CD8-positive, alpha-beta T cell (primary cell): ENCODE measurements at regions of chr12 and their contacts with region 1.

Region 1: GRCh38 chr12:116924558-116925453 is 14.1 kb downstream of the FBXW8 start:
- DNase-seq: peak; percentile 4 to 90 (median 46)
- ATAC-seq: peak; percentile 87
- H3K4me3 ChIP-seq: peak overlapping the region; percentile 7 to 13
- H3K4me3 Mint-ChIP-seq: peak overlapping the region; percentile 68
- H3K27ac ChIP-seq: no peak overlapping the region
- H3K27ac Mint-ChIP-seq: peak overlapping the region; percentile 56
- H3K4me1 ChIP-seq: peaks cover 66% of the 10 kb centered on the region
- H3K4me1 Mint-ChIP-seq: peaks cover 80% of the 10 kb centered on the region
- H3K27me3 ChIP-seq: no peaks in the 10 kb centered on the region
- H3K27me3 Mint-ChIP-seq: no peaks in the 10 kb centered on the region
- CTCF ChIP-seq: no peak

Region 2: GRCh38 chr12:116558280-116559161 is 366.3 kb before region 1 on chr12:
- CTCF ChIA-PET with region 1: no interaction called
- POLR2A ChIA-PET with region 1: no interaction called
- intact Hi-C with region 1: no loop called
- DNase-seq: peak in 1 of 9 experiments; percentile 15
- ATAC-seq: no peak
- H3K4me3 ChIP-seq: peak overlapping the region; percentile 40 to 47
- H3K4me3 Mint-ChIP-seq: peak overlapping the region; percentile 69
- H3K27ac ChIP-seq: peak overlapping the region in 1 of 2 experiments; percentile 53
- H3K27ac Mint-ChIP-seq: peak overlapping the region; percentile 94
- H3K4me1 ChIP-seq: peaks cover 29% of the 10 kb centered on the region
- H3K4me1 Mint-ChIP-seq: peaks cover 48% of the 10 kb centered on the region
- H3K27me3 ChIP-seq: no peaks in the 10 kb centered on the region
- H3K27me3 Mint-ChIP-seq: no peaks in the 10 kb centered on the region
- CTCF ChIP-seq: no peak

Region 3: GRCh38 chr12:116697305-116697704 is 227.5 kb before region 1 on chr12:
- CTCF ChIA-PET with region 1: no interaction called
- POLR2A ChIA-PET with region 1: no interaction called
- intact Hi-C with region 1: no loop called
- DNase-seq: peak in 1 of 9 experiments; percentile 14
- ATAC-seq: no peak
- H3K4me3 ChIP-seq: no peak overlapping the region
- H3K4me3 Mint-ChIP-seq: no peak overlapping the region
- H3K27ac ChIP-seq: no peak overlapping the region
- H3K27ac Mint-ChIP-seq: no peak overlapping the region
- H3K4me1 ChIP-seq: no peaks in the 10 kb centered on the region
- H3K4me1 Mint-ChIP-seq: peaks cover 8% of the 10 kb centered on the region
- H3K27me3 ChIP-seq: peaks cover 0 to 2% of the 10 kb centered on the region in 2 experiments
- H3K27me3 Mint-ChIP-seq: peaks cover 27% of the 10 kb centered on the region
- CTCF ChIP-seq: no peak

Region 4: GRCh38 chr12:116910645-116911451 is 14.0 kb before region 1 on chr12 and contains the start of gene FBXW8:
- CTCF ChIA-PET with region 1: no interaction called
- POLR2A ChIA-PET with region 1: interaction called, 7 read pairs
- intact Hi-C with region 1: loop called (anchors 1 kb)
- DNase-seq: peak; percentile 17 to 79 (median 64)
- ATAC-seq: peak; percentile 75
- H3K4me3 ChIP-seq: peak within 1 kb of the TSS; percentile 52
- H3K4me3 Mint-ChIP-seq: peak within 1 kb of the TSS; percentile 87
- H3K27ac ChIP-seq: peak within 1 kb of the TSS in 1 of 2 experiments; percentile 43
- H3K27ac Mint-ChIP-seq: peak within 1 kb of the TSS; percentile 76
- H3K4me1 ChIP-seq: peaks cover 9% of the 10 kb centered on the region
- H3K4me1 Mint-ChIP-seq: peaks cover 35% of the 10 kb centered on the region
- H3K27me3 ChIP-seq: no peaks in the 10 kb centered on the region
- H3K27me3 Mint-ChIP-seq: peaks cover 2% of the 10 kb centered on the region
- CTCF ChIP-seq: no peak
- total RNA-seq, gene FBXW8: 5.6 to 6.5 TPM

Region 5: DNA sequence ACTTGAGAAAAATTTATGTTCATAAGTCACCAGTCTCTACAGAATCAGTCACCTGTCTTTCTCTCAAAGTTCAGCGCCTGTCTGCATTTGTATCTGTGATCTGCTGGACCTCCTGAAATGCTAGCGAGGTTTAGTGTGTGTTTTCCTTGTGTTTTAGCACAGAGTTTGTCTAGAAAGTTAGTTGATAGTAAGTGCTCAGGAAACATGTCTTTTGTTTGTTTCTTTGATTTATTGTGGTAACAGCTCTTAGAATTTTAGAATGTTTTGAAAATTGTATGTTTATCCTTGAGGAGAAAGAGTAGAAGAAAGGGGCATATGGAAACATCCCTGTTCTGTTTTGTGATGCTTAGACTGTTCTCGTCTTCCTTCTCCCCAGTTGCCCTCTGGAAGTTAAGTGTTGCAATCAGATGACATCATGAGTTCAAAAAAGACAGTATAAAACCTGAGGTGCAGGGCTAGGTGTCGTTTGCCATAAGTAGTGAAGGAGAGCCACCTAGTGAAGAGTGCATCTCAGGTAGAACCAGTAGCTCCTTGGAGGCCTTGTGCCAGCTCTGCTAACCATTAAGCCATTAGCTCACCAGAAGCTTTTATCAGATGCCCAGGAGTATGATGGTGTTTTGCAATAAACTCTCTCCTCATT is 30.7 kb after region 1 on chr12:
- CTCF ChIA-PET with region 1: interaction called, 3 read pairs
- POLR2A ChIA-PET with region 1: no interaction called
- intact Hi-C with region 1: loop called in 1 of 2 experiments (anchors 5 kb)
- DNase-seq: peak in 3 of 9 experiments; percentile 9 to 66 (median 52)
- ATAC-seq: no peak
- H3K4me3 ChIP-seq: no peak overlapping the region
- H3K4me3 Mint-ChIP-seq: no peak overlapping the region
- H3K27ac ChIP-seq: no peak overlapping the region
- H3K27ac Mint-ChIP-seq: no peak overlapping the region
- H3K4me1 ChIP-seq: no peaks in the 10 kb centered on the region
- H3K4me1 Mint-ChIP-seq: no peaks in the 10 kb centered on the region
- H3K27me3 ChIP-seq: no peaks in the 10 kb centered on the region
- H3K27me3 Mint-ChIP-seq: no peaks in the 10 kb centered on the region
- CTCF ChIP-seq: no peak

Region 6: GRCh38 chr12:117190210-117190781 is 265.5 kb after region 1 on chr12 and contains the start of gene FBXO21:
- CTCF ChIA-PET with region 1: no interaction called
- POLR2A ChIA-PET with region 1: no interaction called
- intact Hi-C with region 1: loop called in 1 of 2 experiments (anchors 2 kb)
- DNase-seq: peak; percentile 90 to 98 (median 93)
- ATAC-seq: peak; percentile 96
- H3K4me3 ChIP-seq: peak within 1 kb of the TSS; percentile 49 to 87
- H3K4me3 Mint-ChIP-seq: peak within 1 kb of the TSS; percentile 93
- H3K27ac ChIP-seq: peak within 1 kb of the TSS; percentile 69 to 83
- H3K27ac Mint-ChIP-seq: peak within 1 kb of the TSS; percentile 92
- H3K4me1 ChIP-seq: peaks cover 22% of the 10 kb centered on the region
- H3K4me1 Mint-ChIP-seq: peaks cover 31% of the 10 kb centered on the region
- H3K27me3 ChIP-seq: no peaks in the 10 kb centered on the region
- H3K27me3 Mint-ChIP-seq: no peaks in the 10 kb centered on the region
- CTCF ChIP-seq: no peak
- total RNA-seq, gene FBXO21: 77.7 to 87.7 TPM